Activated naive CD4-positive, alpha-beta T cell treated with anti-CD3 and anti-CD28 coated beads, Interleukin-2, amount 10 ng/mL, durations not matched to agents 7 days and 5 days (primary cell): ENCODE measurements at regions of chr10 and their contacts with region 1.

Region 1: GRCh38 chr10:102420810-102421644 is at the start of gene FBXL15:
- DNase-seq: peak; percentile 97
- H3K4me3 Mint-ChIP-seq: peak within 1 kb of the TSS; percentile 96
- H3K27ac Mint-ChIP-seq: peak within 1 kb of the TSS; percentile 96
- H3K4me1 Mint-ChIP-seq: peaks cover 40% of the 10 kb centered on the region
- H3K27me3 Mint-ChIP-seq: peaks cover 48% of the 10 kb centered on the region

Region 2: GRCh38 chr10:102394079-102394800 is 26.8 kb before region 1 on chr10:
- CTCF ChIA-PET with region 1: interaction called, 33 read pairs
- DNase-seq: peak; percentile 99
- H3K4me3 Mint-ChIP-seq: peak overlapping the region; percentile 79
- H3K27ac Mint-ChIP-seq: peak overlapping the region; percentile 96
- H3K4me1 Mint-ChIP-seq: peaks cover 42% of the 10 kb centered on the region
- H3K27me3 Mint-ChIP-seq: peaks cover 10% of the 10 kb centered on the region

Region 3: DNA sequence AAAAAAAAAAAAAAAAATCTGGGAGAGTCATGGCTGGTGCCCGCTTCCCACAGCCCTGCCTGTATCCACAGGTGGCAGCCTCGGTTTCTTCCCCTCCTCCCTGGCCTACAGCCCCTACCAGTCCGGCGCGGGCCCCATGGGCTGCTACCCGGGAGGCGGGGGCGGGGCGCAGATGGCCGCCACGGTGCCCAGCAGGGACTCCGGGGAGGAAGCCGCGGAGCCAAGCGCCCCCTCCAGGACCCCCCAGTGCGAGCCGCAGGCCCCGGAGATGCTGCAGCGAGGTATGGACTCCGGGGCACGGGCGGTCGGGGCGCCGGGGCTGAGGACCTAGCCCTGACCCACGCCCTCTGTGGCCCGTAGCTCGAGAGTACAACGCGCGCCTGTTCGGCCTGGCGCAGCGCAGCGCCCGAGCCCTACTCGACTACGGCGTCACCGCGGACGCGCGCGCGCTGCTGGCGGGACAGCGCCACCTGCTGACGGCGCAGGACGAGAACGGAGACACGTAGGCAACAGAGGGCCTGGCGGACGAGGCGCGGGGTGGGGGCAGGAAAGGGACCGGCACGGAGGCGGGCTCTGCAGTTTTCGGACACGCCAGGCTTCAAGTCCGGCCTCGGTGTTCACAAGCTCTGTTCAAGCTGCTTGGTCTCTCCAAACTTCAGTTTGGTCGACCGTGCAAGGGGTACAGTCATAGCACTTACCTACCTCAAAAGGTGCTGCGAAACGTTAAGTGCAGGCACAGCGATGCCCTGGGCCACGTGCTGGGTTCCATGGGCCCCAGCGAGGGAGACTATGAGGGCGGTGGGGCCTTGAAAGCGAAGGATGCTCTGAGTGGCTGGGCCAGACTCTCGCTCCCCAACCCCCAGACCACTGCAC is 21.6 kb before region 1 on chr10:
- CTCF ChIA-PET with region 1: interaction called, 33 read pairs
- DNase-seq: peak; percentile 90
- H3K4me3 Mint-ChIP-seq: peak overlapping the region; percentile 62
- H3K27ac Mint-ChIP-seq: peak overlapping the region; percentile 70
- H3K4me1 Mint-ChIP-seq: peaks cover 40% of the 10 kb centered on the region
- H3K27me3 Mint-ChIP-seq: no peaks in the 10 kb centered on the region

Region 4: DNA sequence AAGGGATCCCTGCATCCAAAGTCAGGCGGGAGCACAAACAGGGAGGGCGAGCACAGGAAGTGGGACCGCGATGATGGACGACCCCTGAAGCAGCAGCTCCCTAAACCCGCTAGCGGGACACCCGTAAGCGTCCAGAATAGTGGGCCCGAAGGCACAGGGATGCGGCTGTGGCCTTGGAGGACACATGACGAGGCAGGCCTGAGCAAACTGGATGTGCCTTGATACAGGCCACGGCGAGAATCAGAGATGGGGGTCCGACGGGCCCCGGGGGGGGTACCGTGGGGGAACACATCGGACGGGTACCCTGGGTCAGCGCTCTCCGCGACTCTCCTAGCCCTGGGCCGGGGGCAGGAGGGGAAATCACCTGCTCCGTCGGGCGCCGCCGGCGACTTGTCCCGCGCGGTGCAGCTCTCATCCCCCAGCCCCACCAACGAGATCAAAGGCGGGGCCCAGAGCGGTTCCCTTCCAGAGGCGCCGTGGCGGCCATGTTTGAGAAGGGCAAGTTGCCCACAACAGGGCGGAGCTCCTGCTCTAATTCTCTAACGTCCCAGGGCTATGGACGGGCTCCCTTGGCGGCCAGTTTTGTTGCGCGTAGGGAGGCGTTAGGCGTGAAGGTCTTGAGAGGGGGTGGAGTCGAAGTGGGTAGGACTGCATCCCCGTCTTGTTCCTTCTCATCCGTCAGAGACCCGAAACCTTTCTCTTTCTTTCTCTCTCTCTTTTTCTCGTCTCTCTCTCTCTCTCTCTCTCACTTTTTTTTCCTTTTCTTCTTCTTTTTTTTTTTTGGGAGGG is 11.3 kb after region 1 on chr10 and contains the start of gene CUEDC2:
- CTCF ChIA-PET with region 1: interaction called, 20 read pairs
- DNase-seq: peak; percentile 98
- H3K4me3 Mint-ChIP-seq: peak within 1 kb of the TSS; percentile 92
- H3K27ac Mint-ChIP-seq: peak within 1 kb of the TSS; percentile 93
- H3K4me1 Mint-ChIP-seq: peaks cover 56% of the 10 kb centered on the region
- H3K27me3 Mint-ChIP-seq: peaks cover 4% of the 10 kb centered on the region